PC-9 (cell line): ENCODE measurements at regions of chr3 and their contacts with region 1.

Region 1: DNA sequence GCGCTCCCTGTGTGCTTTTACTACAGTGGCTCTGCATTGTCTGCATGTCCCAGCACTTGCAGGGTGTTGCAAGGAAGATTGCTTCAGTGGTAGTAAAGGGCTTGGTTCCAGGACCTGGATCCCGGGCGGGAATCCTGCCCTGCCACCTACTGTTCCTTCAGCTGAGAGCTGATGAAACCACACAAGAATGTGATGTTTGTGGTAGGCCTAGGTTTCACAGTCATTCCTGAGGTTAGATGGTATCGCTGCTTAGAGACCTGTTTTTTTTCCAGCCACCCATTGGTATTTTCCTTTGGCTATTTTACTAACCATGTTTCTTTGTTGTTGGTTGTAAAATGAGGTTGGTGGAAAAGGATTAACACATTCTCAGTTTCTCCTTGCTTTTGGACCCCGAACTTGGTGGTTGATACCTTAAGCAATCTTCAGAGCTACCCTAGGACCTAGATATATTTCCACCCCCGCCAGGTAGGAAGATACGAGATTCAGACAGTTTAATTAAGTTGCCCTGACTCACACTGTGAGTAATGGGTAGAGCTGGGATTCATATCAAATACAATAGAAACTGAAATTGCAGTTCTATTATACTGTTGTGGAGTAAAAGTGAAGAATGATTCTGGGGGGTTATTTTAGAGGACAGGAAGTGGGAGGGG is 11.4 kb downstream of the GPR87 start:
- DNase-seq: peak; percentile 95 to 99
- H3K4me3 ChIP-seq: peak overlapping the region; percentile 51; the same call in 1 of the 2 replicates
- H3K27ac ChIP-seq: peak overlapping the region; percentile 96
- H3K4me1 ChIP-seq: peaks cover 77% of the 10 kb centered on the region
- H3K27me3 ChIP-seq: no peaks in the 10 kb centered on the region
- CTCF ChIP-seq: no peak

Region 2: GRCh38 chr3:151316267-151316991 is 11.2 kb after region 1 on chr3 and contains the start of gene GPR87:
- CTCF ChIA-PET with region 1: interaction called, 3 read pairs
- POLR2A ChIA-PET with region 1: interaction called, 6 read pairs
- intact Hi-C with region 1: loop called (anchors 1 kb)
- DNase-seq: peak; percentile 63 to 98
- H3K4me3 ChIP-seq: peak within 1 kb of the TSS; percentile 57
- H3K27ac ChIP-seq: peak within 1 kb of the TSS; percentile 93
- H3K4me1 ChIP-seq: peaks cover 53% of the 10 kb centered on the region
- H3K27me3 ChIP-seq: no peaks in the 10 kb centered on the region
- CTCF ChIP-seq: no peak
- total RNA-seq, gene GPR87: 9.0 and 15.5 TPM in 2 replicates

Region 3: GRCh38 chr3:151327571-151328198 is 22.5 kb after region 1 on chr3:
- CTCF ChIA-PET with region 1: interaction called, 16 read pairs
- POLR2A ChIA-PET with region 1: interaction called, 5 read pairs
- intact Hi-C with region 1: loop called (anchors 1 kb)
- DNase-seq: no peak
- H3K4me3 ChIP-seq: no peak overlapping the region
- H3K27ac ChIP-seq: 0 out of 2 replicates have a peak overlapping the region, but pooled peaks have one; percentile 14
- H3K4me1 ChIP-seq: peaks cover 14% of the 10 kb centered on the region
- H3K27me3 ChIP-seq: no peaks in the 10 kb centered on the region
- CTCF ChIP-seq: peak; percentile 81

Region 4: DNA sequence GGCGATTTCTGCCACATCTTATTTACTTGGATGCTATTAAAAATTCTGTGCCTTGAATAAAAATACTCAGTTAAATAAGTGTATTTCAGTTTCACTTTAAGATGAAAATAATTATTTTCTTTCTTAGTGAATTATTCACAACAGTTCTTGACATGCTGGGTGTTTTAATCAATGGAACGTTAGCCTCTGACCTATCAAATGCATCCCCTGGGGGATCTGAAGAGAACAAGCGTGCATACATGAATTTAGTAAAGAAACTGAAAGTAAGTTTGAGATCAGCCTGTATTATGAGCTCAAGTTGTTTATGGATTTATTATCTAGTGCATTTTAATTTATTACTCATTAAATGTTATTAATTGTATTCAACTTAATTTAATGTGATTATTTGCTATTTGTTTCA is 78.7 kb after region 1 on chr3:
- CTCF ChIA-PET with region 1: no interaction called
- POLR2A ChIA-PET with region 1: interaction called, 16 read pairs
- intact Hi-C with region 1: no loop called
- DNase-seq: no peak
- H3K4me3 ChIP-seq: no peak overlapping the region
- H3K27ac ChIP-seq: no peak overlapping the region
- H3K4me1 ChIP-seq: no peaks in the 10 kb centered on the region
- H3K27me3 ChIP-seq: no peaks in the 10 kb centered on the region
- CTCF ChIP-seq: no peak

Region 5: GRCh38 chr3:151544164-151544548 is 238.9 kb after region 1 on chr3:
- CTCF ChIA-PET with region 1: no interaction called
- POLR2A ChIA-PET with region 1: interaction called, 11 read pairs
- intact Hi-C with region 1: no loop called
- DNase-seq: no peak
- H3K4me3 ChIP-seq: no peak overlapping the region
- H3K27ac ChIP-seq: 0 out of 2 replicates have a peak overlapping the region, but pooled peaks have one; percentile 47
- H3K4me1 ChIP-seq: peaks cover 8% of the 10 kb centered on the region
- H3K27me3 ChIP-seq: no peaks in the 10 kb centered on the region
- CTCF ChIP-seq: no peak

Region 6: GRCh38 chr3:151770956-151771355 is 465.7 kb after region 1 on chr3:
- CTCF ChIA-PET with region 1: no interaction called
- POLR2A ChIA-PET with region 1: no interaction called
- intact Hi-C with region 1: loop called (anchors 1 kb)
- DNase-seq: peak in 1 of 2 experiments; percentile 45
- H3K4me3 ChIP-seq: no peak overlapping the region
- H3K27ac ChIP-seq: no peak overlapping the region
- H3K4me1 ChIP-seq: peaks cover 13% of the 10 kb centered on the region
- H3K27me3 ChIP-seq: no peaks in the 10 kb centered on the region
- CTCF ChIP-seq: no peak